BJ (cell line): ENCODE measurements at regions of chr6 and their contacts with region 1.

Region 1: DNA sequence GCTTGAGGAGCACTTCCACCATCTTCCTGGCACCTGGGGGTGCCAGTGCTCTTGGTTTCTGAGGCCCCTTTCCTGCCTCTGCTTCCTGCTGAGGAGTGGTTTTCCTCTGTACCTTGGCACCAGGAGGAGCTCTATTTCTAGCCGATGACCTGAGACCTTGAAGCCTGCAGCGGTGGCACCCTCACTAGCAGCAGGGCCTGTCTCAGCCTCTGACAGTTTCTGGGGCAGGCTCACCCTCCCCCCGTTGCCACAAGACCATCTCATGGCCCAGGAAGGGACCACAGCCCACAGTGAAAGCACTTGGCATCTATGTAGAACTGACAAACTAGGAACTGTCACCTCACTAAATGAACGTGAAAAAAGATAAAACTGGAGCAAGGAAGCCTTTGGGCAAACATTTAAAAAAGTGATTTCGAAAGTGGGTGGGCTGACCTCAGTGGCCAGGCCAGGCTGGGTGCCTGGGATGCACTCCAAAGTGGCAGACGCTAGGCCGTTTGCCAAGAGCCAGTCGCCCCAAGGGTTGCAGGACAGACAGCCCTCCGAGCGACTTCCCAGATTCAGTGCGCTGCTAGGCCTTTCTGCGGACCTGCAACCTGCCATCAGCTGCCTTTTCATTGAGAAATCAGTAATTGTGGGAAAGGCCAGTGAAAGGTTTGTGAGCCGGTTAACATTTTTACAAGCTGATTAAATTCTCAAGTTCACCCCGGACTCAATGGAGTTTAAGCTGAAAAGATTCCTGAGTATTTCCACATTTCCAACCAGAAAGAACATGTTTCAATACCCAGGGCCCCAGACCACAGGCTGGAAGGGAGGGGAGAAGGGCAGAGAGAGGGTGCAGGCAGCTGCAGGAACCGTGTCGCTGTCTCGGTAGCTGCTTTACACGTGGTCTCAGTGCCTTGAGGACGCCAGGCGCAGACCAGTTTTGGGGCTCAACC is 303.7 kb downstream of the ESR1 start:
- DNase-seq: peak; percentile 47
- H3K4me3 ChIP-seq: no peak overlapping the region
- H3K27me3 ChIP-seq: no peaks in the 10 kb centered on the region
- CTCF ChIP-seq: no peak

Region 2: DNA sequence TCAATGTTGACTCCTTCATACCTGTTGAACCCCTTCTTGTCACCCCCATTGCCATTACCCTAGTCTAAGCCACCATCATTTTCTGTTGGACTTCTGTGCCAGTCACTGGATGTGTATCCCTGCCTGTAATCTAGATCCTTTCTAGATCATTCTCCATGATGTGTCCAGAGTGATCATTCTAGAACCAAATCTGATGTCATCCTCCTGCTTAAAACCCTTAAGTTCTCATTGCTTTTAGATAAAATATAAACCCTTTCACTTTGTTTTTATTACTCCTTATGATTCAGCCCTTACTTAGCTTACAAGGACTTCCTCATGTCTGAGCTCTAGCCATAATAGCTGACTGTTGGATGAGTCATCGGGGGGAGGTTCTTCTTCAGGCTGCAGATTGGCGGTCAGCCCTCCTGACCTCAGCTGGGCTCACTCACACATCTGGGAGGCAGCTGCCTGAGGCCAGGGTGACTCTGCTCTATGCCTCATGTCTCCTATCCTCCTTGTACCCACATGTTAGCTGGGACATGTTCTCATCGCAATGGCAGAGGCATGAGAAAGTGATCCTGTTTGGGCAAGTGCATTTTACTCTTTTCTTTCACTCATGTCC is 16.1 kb before region 1 on chr6:
- CTCF ChIA-PET with region 1: interaction called, 12 read pairs
- POLR2A ChIA-PET with region 1: interaction called, 4 read pairs
- DNase-seq: peak; percentile 99
- H3K4me3 ChIP-seq: no peak overlapping the region
- H3K27me3 ChIP-seq: no peaks in the 10 kb centered on the region
- CTCF ChIP-seq: no peak